Activated CD4-positive, alpha-beta T cell treated with anti-CD3 and anti-CD28 coated beads, Interleukin-2, amount 10 ng/mL, durations not matched to agents 24 days and 14 days (primary cell): ENCODE measurements at regions of chr10 and their contacts with region 1.

Region 1: GRCh38 chr10:91908337-91909116 is 759 bp downstream of the FGFBP3 start:
- DNase-seq: peak; percentile 92
- H3K4me3 Mint-ChIP-seq: peak overlapping the region; percentile 95
- H3K27ac Mint-ChIP-seq: peak overlapping the region; percentile 88
- H3K4me1 Mint-ChIP-seq: peaks cover 15% of the 10 kb centered on the region
- H3K27me3 Mint-ChIP-seq: peaks cover 11% of the 10 kb centered on the region

Region 2: GRCh38 chr10:91389636-91390512 is 518.7 kb before region 1 on chr10:
- intact Hi-C with region 1: loop called (anchors 2 kb)
- DNase-seq: peak; percentile 78
- H3K4me3 Mint-ChIP-seq: no peak overlapping the region
- H3K27ac Mint-ChIP-seq: peak overlapping the region; percentile 18
- H3K4me1 Mint-ChIP-seq: peaks cover 6% of the 10 kb centered on the region
- H3K27me3 Mint-ChIP-seq: peaks cover 20% of the 10 kb centered on the region

Region 3: GRCh38 chr10:91758303-91759146 is 150.0 kb before region 1 on chr10:
- intact Hi-C with region 1: loop called (anchors 1 kb)
- DNase-seq: no peak
- H3K4me3 Mint-ChIP-seq: no peak overlapping the region
- H3K27ac Mint-ChIP-seq: no peak overlapping the region
- H3K4me1 Mint-ChIP-seq: peaks cover 5% of the 10 kb centered on the region
- H3K27me3 Mint-ChIP-seq: peaks cover 49% of the 10 kb centered on the region

Region 4: GRCh38 chr10:91856637-91857036 is 51.9 kb before region 1 on chr10:
- intact Hi-C with region 1: loop called (anchors 2 kb)
- DNase-seq: no peak
- H3K4me3 Mint-ChIP-seq: no peak overlapping the region
- H3K27ac Mint-ChIP-seq: no peak overlapping the region
- H3K4me1 Mint-ChIP-seq: peaks cover 3% of the 10 kb centered on the region
- H3K27me3 Mint-ChIP-seq: no peaks in the 10 kb centered on the region